ENCODE measurements at regions of chr9 and their contacts with region 1.

Region 1: GRCh38 chr9:90943341-90943740 is 141.7 kb downstream of the SYK start:
- DNase-seq: no peak
- H3K4me3 Mint-ChIP-seq: no peak overlapping the region
- H3K27ac Mint-ChIP-seq: peak overlapping the region; percentile 49
- H3K4me1 Mint-ChIP-seq: peaks cover 7% of the 10 kb centered on the region
- H3K27me3 Mint-ChIP-seq: peaks cover 35% of the 10 kb centered on the region

Region 2: GRCh38 chr9:90964101-90965020 is 21.0 kb after region 1 on chr9:
- intact Hi-C with region 1: loop called (anchors 1 kb)
- DNase-seq: no peak
- H3K4me3 Mint-ChIP-seq: peak overlapping the region; percentile 18
- H3K27ac Mint-ChIP-seq: peak overlapping the region; percentile 25
- H3K4me1 Mint-ChIP-seq: peaks cover 25% of the 10 kb centered on the region
- H3K27me3 Mint-ChIP-seq: peaks cover 2% of the 10 kb centered on the region

Region 3: DNA sequence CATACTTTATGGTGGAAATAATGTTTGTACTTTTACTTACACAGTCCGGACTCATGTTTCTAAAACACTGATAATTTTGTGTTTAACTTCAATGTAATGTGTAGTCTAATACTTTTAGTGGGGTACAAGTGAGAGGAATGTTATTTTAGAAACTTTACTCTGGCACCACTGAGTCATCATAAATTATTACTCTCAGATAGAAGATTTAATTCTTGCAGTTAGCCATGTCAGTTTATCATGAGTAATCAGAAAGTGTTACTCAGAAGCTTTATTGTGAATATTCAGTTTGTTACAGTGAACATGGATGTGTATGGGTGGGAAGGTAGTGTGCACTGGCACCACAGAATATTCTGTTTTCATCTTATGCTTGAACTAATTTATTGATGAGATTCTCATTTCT is 1441.0 kb after region 1 on chr9:
- intact Hi-C with region 1: no loop called
- DNase-seq: no peak
- H3K4me3 Mint-ChIP-seq: no peak overlapping the region
- H3K27ac Mint-ChIP-seq: no peak overlapping the region
- H3K4me1 Mint-ChIP-seq: peaks cover 10% of the 10 kb centered on the region
- H3K27me3 Mint-ChIP-seq: no peaks in the 10 kb centered on the region

Measured in activated CD4-positive, alpha-beta T cell treated with anti-CD3 and anti-CD28 coated beads, Interleukin-2, amount 10 ng/mL, durations not matched to agents 24 days and 14 days (primary cell).